Naive thymus-derived CD8-positive, alpha-beta T cell (primary cell): ENCODE measurements at regions of chr12 and their contacts with region 1.

Region 1: GRCh38 chr12:1583421-1584078 is 10.8 kb downstream of the FBXL14 start:
- DNase-seq: peak; percentile 24 to 84 (median 64)
- ATAC-seq: peak; percentile 65 to 69
- H3K4me3 Mint-ChIP-seq: peak overlapping the region in 6 of 10 donors; percentile 3 to 55 (median 12)
- H3K27ac Mint-ChIP-seq: peak overlapping the region in 7 of 10 donors; percentile 10 to 69 (median 53)
- H3K4me1 Mint-ChIP-seq: peaks cover 13 to 27% (median 26%) of the 10 kb centered on the region in 4 donors
- H3K27me3 Mint-ChIP-seq: no peaks in the 10 kb centered on the region

Region 2: DNA sequence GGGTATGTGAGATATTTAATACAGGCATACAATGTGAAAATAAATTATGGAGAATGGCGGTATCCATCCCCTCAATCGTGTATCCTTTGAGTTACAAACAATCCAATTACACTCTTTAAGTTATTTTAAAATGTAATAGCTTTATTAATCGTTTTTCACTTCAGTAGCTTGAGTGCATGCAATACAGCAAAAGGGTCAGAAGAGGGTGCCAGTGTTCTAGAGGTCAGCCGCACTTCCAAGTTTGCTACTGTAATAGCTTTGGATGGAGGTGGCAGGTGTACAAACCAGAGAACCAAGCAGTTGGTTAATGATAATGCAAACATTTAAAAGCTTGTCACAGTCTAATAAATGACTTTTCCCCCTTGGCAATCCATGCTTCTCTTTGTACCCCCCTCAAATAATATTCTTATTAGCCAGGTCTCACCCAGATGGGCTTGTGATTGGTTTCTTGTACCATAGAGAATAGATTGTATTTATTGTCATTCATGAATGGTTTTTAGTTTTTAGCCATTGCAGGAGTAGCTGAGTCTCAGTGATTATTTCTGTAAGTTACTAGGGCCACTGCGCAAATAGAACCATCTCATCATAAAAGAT is 465.5 kb before region 1 on chr12:
- POLR2A ChIA-PET with region 1: interaction called, 18 read pairs
- DNase-seq: peak; percentile 42 to 85 (median 66)
- ATAC-seq: peak in 1 of 2 donors; percentile 48
- H3K4me3 Mint-ChIP-seq: no peak overlapping the region
- H3K27ac Mint-ChIP-seq: peak overlapping the region in 1 of 10 donors; percentile 85
- H3K4me1 Mint-ChIP-seq: peaks cover 4 to 15% (median 10%) of the 10 kb centered on the region in 4 donors
- H3K27me3 Mint-ChIP-seq: no peaks in the 10 kb centered on the region

Region 3: GRCh38 chr12:1594261-1595025 is 10.9 kb after region 1 on chr12 and contains the start of gene FBXL14:
- POLR2A ChIA-PET with region 1: interaction called, 15 read pairs
- DNase-seq: peak; percentile 85 to 96 (median 92)
- ATAC-seq: peak; percentile 67 to 69
- H3K4me3 Mint-ChIP-seq: peak within 1 kb of the TSS; percentile 89 to 97 (median 96)
- H3K27ac Mint-ChIP-seq: peak within 1 kb of the TSS; percentile 91 to 99 (median 97)
- H3K4me1 Mint-ChIP-seq: peaks cover 28 to 55% (median 51%) of the 10 kb centered on the region in 4 donors
- H3K27me3 Mint-ChIP-seq: no peaks in the 10 kb centered on the region
- polyA plus RNA-seq, gene FBXL14: 12.1 to 24.5 (median 16.6) TPM